Esophagus muscularis mucosa (tissue), 4 donors: ENCODE measurements at regions of chr19 and their contacts with region 1.

Region 1: DNA sequence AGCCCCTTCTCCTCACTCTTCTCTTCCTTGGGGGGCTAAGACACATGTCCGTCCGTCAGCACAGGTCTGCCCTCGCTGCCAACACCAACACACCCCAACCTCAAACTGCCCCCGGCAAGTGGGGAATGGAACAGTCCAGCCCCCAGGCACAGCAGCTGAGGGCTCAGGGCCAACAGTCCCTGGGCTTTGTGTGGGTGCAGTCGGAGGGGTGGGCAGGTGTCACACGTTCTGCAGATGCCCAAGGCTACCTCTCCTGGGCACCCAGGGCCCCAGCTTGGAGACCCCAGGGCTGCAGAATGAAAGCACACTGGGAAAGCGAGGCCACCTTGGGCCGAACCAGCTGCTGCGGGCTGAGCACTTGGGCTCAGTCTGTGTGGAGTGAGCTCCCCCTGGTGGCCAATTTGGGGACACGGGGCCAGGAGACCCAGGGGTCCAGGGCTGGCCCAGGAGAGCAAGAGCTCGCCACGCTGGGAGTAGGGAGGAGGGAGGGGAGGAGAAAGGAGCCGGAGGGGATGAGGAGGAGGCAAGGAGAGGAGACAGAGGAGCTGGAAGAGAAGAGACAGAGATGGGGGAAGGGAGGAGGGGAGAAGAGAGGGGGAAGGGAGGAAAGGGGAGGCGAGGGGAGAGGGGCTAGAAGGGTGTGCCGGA is 14.0 kb upstream of the ATP8B3 start:
- DNase-seq: no peak
- H3K4me3 ChIP-seq: no peak overlapping the region
- H3K27ac ChIP-seq: no peak overlapping the region
- H3K4me1 ChIP-seq: peaks cover 8 to 21% (median 16%) of the 10 kb centered on the region in 4 donors
- H3K27me3 ChIP-seq: no peaks in the 10 kb centered on the region
- CTCF ChIP-seq: peak; percentile 88 to 92 (median 89)
- EP300 ChIP-seq: no peak
- POLR2A ChIP-seq: no peak

Region 2: DNA sequence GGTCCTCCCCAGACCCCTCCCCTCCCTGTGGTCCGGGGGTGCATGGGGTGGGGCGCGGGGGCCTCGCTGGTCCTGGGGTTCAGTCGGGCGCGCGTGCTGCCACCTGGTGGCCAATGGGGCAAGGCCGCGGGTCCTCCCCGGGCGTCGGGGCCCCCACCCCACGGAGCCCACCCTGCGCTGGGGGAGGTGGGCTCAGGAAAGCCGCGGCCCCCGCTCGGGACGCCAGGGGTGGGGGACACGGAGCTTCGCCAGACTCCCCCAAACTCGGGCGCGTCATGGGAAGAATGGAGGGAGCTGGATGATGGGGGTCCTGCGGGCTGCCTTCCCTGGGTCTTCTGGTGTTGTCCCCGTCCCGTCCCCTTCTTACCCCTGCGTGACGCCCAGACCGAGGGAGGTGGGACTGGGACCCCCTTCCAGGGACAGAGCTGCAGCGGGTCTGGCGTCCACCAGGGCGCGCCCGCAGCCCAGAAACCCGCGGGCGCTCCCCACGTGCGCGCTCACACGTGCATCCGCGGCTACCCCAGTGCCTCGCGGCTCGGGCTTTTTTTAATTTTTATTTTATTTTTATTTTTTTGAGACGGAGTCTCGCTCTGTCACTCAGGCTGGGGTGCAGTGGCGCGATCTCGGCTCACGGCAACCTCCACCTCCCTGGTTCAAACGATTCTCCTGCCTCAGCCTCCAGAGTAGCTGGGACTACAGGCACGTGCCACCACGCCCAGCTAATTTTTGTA is 153.8 kb before region 1 on chr19:
- intact Hi-C with region 1: loop called (anchors 10 kb)
- DNase-seq: no peak
- H3K4me3 ChIP-seq: peak overlapping the region; percentile 0 to 38 (median 25)
- H3K27ac ChIP-seq: no peak overlapping the region
- H3K4me1 ChIP-seq: peaks cover 8 to 41% (median 31%) of the 10 kb centered on the region in 4 donors
- H3K27me3 ChIP-seq: peaks cover 7 to 100% (median 80%) of the 10 kb centered on the region in 4 donors
- CTCF ChIP-seq: peak; percentile 48 to 88 (median 83)
- EP300 ChIP-seq: no peak
- POLR2A ChIP-seq: no peak

Region 3: DNA sequence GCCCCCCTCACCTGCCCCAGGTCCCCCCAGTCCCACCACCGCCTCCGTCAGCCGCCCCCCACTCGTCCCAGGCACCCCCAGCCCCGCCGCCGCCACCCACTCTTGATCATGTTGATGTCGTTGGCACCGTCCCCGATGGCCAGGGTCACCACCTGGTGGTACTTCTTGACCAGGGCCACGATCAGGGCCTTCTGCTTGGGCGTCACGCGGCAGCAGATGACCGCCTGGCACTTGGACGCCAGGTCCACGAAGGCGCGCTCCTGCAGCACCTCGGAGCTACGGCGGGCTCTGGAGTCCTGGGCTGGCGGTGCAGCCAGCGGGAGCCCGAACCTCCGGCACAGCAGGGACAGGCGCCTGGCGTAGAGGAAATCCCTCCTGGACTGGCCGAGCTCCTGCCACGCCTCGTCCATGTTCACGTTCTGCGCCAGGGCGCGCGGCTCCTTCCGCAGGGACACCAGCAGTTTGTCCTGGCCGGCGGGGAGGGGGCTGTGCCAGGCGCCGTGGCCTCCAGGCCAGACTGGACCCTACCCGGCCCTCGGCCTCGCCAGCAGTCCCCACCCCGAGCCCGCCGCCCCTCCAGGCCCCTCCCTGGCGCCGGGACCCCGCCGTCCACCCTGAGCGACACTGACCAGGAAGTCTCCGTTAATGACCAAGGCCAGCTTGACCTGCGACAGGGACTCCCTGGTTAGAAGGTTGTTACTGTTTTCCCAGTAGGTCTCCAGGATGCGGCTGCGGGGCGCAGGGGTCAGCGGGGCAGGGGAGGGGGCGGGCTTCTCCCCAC is 36.6 kb before region 1 on chr19:
- intact Hi-C with region 1: loop called (anchors 2 kb)
- DNase-seq: no peak
- H3K4me3 ChIP-seq: peak overlapping the region; percentile 13 to 32 (median 22)
- H3K27ac ChIP-seq: no peak overlapping the region
- H3K4me1 ChIP-seq: peaks cover 0 to 15% (median 14%) of the 10 kb centered on the region in 4 donors
- H3K27me3 ChIP-seq: peaks cover 0 to 88% (median 15%) of the 10 kb centered on the region in 4 donors
- CTCF ChIP-seq: no peak
- EP300 ChIP-seq: no peak
- POLR2A ChIP-seq: no peak